ENCODE measurements at regions of chr2 and their contacts with region 1.

Region 1: GRCh38 chr2:223957092-223957851 is at the start of gene MRPL44:
- DNase-seq: peak; percentile 97
- ATAC-seq: peak; percentile 99
- H3K4me3 Mint-ChIP-seq: peak within 1 kb of the TSS; percentile 96
- H3K27ac Mint-ChIP-seq: peak within 1 kb of the TSS; percentile 94
- H3K4me1 Mint-ChIP-seq: peaks cover 58% of the 10 kb centered on the region
- H3K27me3 Mint-ChIP-seq: no peaks in the 10 kb centered on the region
- total RNA-seq, gene MRPL44: 29.0 to 30.5 TPM

Region 2: DNA sequence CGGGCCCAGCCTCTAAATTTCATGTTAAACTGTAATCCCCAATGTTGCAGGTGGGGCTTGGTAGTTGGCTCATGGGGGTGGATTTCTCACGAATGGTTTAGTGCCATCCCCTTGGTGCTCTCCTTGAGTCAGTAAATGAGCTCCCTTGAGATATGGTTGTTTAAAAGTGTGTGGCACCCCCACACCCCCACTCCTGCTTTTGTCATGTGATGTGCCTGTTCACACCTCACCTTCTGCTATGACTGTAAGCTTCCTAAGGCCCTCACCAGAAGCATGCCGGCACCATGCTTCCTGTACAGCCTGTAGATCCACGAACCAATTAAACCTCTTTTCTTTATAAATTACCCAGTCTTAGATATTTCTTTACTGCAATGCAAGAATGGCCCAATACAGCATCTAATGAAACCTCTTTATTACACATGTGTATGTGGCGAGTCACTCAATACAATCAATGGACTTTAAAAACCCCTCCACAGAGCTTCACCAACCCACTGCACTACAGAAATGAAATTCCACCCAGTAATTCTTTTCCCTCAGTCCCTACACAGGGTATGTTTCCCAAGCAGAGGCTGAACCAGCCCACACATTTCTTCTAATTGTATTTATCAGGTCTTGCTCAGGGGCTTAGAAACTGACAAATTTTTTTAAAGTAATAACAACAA is 59.5 kb before region 1 on chr2:
- CTCF ChIA-PET with region 1: no interaction called
- POLR2A ChIA-PET with region 1: no interaction called
- DNase-seq: no peak
- ATAC-seq: no peak
- H3K4me3 Mint-ChIP-seq: no peak overlapping the region
- H3K27ac Mint-ChIP-seq: no peak overlapping the region
- H3K4me1 Mint-ChIP-seq: peaks cover 18% of the 10 kb centered on the region
- H3K27me3 Mint-ChIP-seq: no peaks in the 10 kb centered on the region

Region 3: GRCh38 chr2:223944703-223945531 is 12.4 kb before region 1 on chr2 and contains the start of gene WDFY1:
- CTCF ChIA-PET with region 1: interaction called, 10 read pairs
- POLR2A ChIA-PET with region 1: interaction called, 9 read pairs
- DNase-seq: peak; percentile 86
- ATAC-seq: peak; percentile 88
- H3K4me3 Mint-ChIP-seq: peak within 1 kb of the TSS; percentile 89
- H3K27ac Mint-ChIP-seq: peak within 1 kb of the TSS; percentile 91
- H3K4me1 Mint-ChIP-seq: peaks cover 60% of the 10 kb centered on the region
- H3K27me3 Mint-ChIP-seq: no peaks in the 10 kb centered on the region
- total RNA-seq, gene WDFY1: 41.5 to 47.1 TPM

Measured in activated CD8-positive, alpha-beta T cell treated with anti-CD3 and anti-CD28 coated beads, Interleukin-2, amount 10 ng/mL, durations not matched to agents 7 days and 5 days (primary cell).